Prostate gland (tissue), 2 donors: ENCODE measurements at regions of chr19 and their contacts with region 1.

Region 1: DNA sequence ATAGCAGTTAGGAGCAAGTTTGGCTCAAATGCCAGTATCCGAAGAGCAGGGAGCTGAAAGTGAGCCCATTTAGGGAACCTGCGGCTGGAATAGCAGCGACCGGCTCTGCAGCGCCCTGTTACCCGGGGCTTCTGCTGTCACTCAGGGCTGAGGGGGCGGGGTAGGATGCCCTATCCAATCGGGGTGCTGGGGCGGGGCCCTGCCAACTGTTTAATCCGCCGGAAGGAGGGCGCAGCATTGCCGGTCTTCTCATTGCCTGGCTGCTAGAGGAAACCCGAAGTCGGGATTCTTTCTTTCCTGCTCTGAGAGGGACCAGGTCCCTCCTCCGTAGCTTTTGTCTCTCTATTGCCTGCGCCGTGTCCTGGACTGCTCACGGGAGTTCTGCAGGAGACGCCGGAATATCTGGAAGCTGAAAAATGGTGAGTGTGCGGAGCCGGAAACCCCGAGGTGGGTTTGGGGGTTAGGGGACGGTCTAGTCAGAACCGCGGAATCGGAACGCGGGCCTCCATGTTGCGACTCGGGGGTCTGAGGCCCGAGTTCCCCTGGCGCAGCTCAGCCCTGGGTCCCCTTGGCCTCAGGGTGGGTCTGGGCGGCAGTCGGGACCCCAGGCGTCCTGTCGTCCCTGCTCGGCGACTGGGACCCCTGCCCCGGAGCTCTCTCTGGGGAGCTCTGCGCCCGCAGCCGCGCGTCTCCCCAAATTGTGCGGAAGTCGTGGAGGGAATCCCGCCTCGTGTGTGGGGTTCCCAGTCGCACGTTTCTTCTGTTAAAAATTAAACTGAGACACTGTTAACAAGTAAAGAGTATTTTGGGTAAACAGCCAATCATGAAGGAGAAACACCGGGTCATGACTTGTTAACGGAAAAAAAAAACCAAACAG is 22.8 kb downstream of the ZNF763 start:
- DNase-seq: peak; percentile 95
- H3K4me3 ChIP-seq: peak overlapping the region; percentile 65 to 73
- H3K27ac ChIP-seq: peak overlapping the region; percentile 77 to 85
- H3K4me1 ChIP-seq: no peaks in the 10 kb centered on the region
- H3K27me3 ChIP-seq: no peaks in the 10 kb centered on the region
- CTCF ChIP-seq: peak in 2 of 4 experiments; percentile 5 to 22
- POLR2A ChIP-seq: peak; percentile 68

Region 2: GRCh38 chr19:11798391-11799330 is 189.0 kb before region 1 on chr19 and contains the start of gene ZNF491:
- intact Hi-C with region 1: loop called (anchors 1 kb)
- DNase-seq: peak; percentile 91
- H3K4me3 ChIP-seq: peak within 1 kb of the TSS; percentile 53 to 69
- H3K27ac ChIP-seq: peak within 1 kb of the TSS; percentile 76 to 81
- H3K4me1 ChIP-seq: peaks cover 8% of the 10 kb centered on the region
- H3K27me3 ChIP-seq: no peaks in the 10 kb centered on the region
- CTCF ChIP-seq: peak in 3 of 4 experiments; percentile 7 to 54 (median 21)
- POLR2A ChIP-seq: peak; percentile 86
- total RNA-seq, gene ZNF491: 1.6 to 2.3 TPM

Region 3: GRCh38 chr19:11868188-11868587 is 119.5 kb before region 1 on chr19:
- intact Hi-C with region 1: no loop called
- DNase-seq: no peak
- H3K4me3 ChIP-seq: no peak overlapping the region
- H3K27ac ChIP-seq: no peak overlapping the region
- H3K4me1 ChIP-seq: no peaks in the 10 kb centered on the region
- H3K27me3 ChIP-seq: no peaks in the 10 kb centered on the region
- CTCF ChIP-seq: no peak
- POLR2A ChIP-seq: no peak

Region 4: GRCh38 chr19:11881151-11881800 is 106.4 kb before region 1 on chr19:
- intact Hi-C with region 1: loop called (anchors 2 kb)
- DNase-seq: peak; percentile 49
- H3K4me3 ChIP-seq: no peak overlapping the region
- H3K27ac ChIP-seq: no peak overlapping the region
- H3K4me1 ChIP-seq: no peaks in the 10 kb centered on the region
- H3K27me3 ChIP-seq: no peaks in the 10 kb centered on the region
- CTCF ChIP-seq: peak in 3 of 4 experiments; percentile 59 to 73 (median 63)
- POLR2A ChIP-seq: no peak

Region 5: DNA sequence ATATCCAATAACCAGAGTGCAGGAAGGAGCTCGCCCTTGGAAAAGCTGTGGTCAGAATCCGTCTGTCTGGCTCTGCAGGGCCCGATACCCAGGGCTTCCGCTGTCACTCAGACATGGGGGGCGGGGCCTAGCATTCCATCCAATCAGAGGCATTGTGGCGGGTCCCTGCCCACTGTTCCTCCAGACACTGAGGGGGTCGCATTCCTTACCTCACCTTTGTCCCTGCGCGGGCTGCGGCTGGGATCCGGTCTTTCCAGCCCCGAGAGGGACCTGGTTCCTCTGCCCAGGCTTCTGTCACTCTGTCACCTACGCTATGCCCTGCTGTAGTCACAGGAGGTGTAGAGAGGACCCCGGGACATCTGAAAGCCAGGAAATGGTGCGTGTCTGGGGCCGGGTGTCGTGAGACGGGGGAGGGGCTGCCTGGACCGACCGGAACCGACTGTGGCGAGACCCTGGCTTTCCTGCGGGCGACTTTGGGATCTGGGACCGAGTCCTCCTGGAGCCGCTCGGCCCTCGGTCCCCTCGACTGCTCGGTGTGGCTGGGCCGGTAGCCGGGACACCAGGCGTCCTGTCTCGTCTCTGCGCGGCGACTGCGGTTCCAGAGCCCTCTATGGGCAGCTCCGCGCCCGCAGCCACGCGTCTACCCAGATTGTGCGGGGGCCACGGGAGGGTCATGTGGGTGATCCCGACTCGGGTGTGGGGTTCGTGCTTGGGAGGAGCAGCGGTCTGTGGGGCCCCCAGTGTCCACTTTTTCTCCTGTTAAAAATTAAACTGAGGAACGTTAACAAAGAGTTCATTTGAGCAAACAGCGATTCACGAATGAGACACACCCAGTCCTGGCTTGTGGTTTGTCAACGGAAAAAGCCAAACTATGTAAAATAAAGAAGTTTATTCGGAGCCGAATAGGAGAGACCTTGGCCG is 99.8 kb before region 1 on chr19 and contains the start of gene ZNF69:
- intact Hi-C with region 1: loop called (anchors 2 kb)
- DNase-seq: peak; percentile 91
- H3K4me3 ChIP-seq: peak within 1 kb of the TSS; percentile 57 to 75
- H3K27ac ChIP-seq: peak within 1 kb of the TSS; percentile 92 to 96
- H3K4me1 ChIP-seq: no peaks in the 10 kb centered on the region
- H3K27me3 ChIP-seq: no peaks in the 10 kb centered on the region
- CTCF ChIP-seq: peak in 3 of 4 experiments; percentile 26 to 42 (median 33)
- POLR2A ChIP-seq: peak; percentile 53
- total RNA-seq, gene ZNF69: 14.4 to 28.1 TPM

Region 6: GRCh38 chr19:11924886-11925650 is 62.6 kb before region 1 on chr19 and contains the start of gene ZNF700:
- intact Hi-C with region 1: loop called (anchors 1 kb)
- DNase-seq: peak; percentile 98
- H3K4me3 ChIP-seq: peak within 1 kb of the TSS; percentile 79 to 98
- H3K27ac ChIP-seq: peak within 1 kb of the TSS; percentile 97 to 98
- H3K4me1 ChIP-seq: no peaks in the 10 kb centered on the region
- H3K27me3 ChIP-seq: no peaks in the 10 kb centered on the region
- CTCF ChIP-seq: peak in 1 of 4 experiments; percentile 15
- POLR2A ChIP-seq: peak; percentile 87
- total RNA-seq, gene ZNF700: 16.8 to 18.0 TPM

Region 7: GRCh38 chr19:11964858-11965645 is 22.6 kb before region 1 on chr19 and contains the start of gene ZNF763:
- intact Hi-C with region 1: loop called (anchors 1 kb)
- DNase-seq: peak; percentile 95
- H3K4me3 ChIP-seq: peak within 1 kb of the TSS; percentile 69 to 71
- H3K27ac ChIP-seq: peak within 1 kb of the TSS; percentile 95 to 97
- H3K4me1 ChIP-seq: no peaks in the 10 kb centered on the region
- H3K27me3 ChIP-seq: no peaks in the 10 kb centered on the region
- CTCF ChIP-seq: no peak
- POLR2A ChIP-seq: peak; percentile 63
- total RNA-seq, gene ZNF763: 4.0 to 5.6 TPM